Activated CD4-positive, alpha-beta T cell treated with anti-CD3 and anti-CD28 coated beads for 36 hours (primary cell): ENCODE measurements at regions of chr13 and their contacts with region 1.

Region 1: DNA sequence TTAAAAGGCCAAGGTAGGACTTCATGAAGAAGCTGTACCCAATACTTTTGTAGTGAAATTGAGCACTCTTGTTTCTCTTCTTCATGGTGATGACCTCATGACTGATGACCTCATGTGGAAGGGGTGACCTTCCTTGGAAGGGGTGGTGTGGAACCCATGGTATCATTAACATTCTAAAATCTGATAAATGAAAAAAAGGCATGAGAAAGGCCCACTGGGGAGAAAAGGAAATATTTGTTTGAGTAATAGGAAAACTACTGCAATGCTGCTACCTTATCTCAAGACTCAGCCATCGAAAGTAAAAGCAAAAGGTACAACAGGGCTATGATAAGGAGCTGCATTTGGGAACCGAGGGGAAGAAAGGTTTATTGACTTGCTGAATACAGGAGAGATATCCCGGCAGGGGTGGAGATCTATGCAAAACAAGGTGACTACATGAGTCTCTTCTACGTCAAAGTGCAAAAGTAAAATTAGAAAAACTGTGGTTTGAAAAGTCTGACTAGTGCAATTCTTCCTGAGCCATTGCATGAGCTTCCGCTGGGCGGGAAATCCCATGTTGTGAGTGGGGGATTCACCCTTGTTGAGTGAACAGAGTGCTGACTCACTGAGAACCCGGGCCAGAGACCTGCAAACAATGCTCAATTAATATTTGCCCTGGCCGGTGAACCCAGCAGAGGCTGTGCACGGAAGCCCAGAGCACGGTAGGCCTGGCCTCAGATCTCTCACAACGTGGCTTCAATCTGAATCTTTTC is 138.9 kb upstream of the RFC3 start:
- DNase-seq: peak; percentile 91
- ATAC-seq: peak; percentile 90
- H3K4me3 Mint-ChIP-seq: peak overlapping the region; percentile 64
- H3K27ac Mint-ChIP-seq: peak overlapping the region; percentile 89
- H3K4me1 Mint-ChIP-seq: peaks cover 37% of the 10 kb centered on the region
- H3K27me3 Mint-ChIP-seq: no peaks in the 10 kb centered on the region

Region 2: GRCh38 chr13:33639626-33640080 is 39.4 kb before region 1 on chr13:
- CTCF ChIA-PET with region 1: interaction called, 5 read pairs
- POLR2A ChIA-PET with region 1: no interaction called
- intact Hi-C with region 1: loop called (anchors 1 kb)
- DNase-seq: peak; percentile 79
- ATAC-seq: peak; percentile 89
- H3K4me3 Mint-ChIP-seq: no peak overlapping the region
- H3K27ac Mint-ChIP-seq: peak overlapping the region; percentile 88
- H3K4me1 Mint-ChIP-seq: peaks cover 50% of the 10 kb centered on the region
- H3K27me3 Mint-ChIP-seq: peaks cover under 1% of the 10 kb centered on the region

Region 3: DNA sequence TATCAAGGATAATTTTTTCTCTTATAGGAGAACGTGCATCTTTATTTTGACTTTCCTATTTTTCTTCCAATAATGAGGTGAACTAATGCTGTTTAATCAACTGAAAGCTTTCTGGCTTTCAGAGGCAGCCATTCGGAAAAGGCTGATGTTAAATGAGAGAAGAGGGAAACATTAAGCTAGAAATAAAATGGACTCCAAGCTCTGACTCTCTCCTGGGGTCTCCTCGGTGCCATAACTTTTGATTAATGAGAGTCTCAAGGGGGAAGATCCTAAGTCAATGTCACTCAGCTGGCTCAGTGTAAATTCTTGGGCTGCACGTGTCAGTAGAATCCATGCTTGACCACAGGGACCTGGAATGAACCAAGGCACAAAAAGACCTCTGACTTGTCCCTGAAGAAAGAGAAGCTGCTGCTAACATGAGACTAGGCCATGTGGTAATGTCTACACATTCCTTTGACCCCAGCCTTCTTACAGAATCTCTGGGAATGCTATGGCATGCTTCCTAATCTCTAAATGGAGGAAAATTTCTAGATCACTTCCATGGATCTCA is 13.4 kb before region 1 on chr13:
- CTCF ChIA-PET with region 1: no interaction called
- POLR2A ChIA-PET with region 1: no interaction called
- intact Hi-C with region 1: no loop called
- DNase-seq: no peak
- ATAC-seq: no peak
- H3K4me3 Mint-ChIP-seq: no peak overlapping the region
- H3K27ac Mint-ChIP-seq: no peak overlapping the region
- H3K4me1 Mint-ChIP-seq: peaks cover 7% of the 10 kb centered on the region
- H3K27me3 Mint-ChIP-seq: no peaks in the 10 kb centered on the region

Region 4: GRCh38 chr13:33865945-33866344 is 186.9 kb after region 1 on chr13:
- CTCF ChIA-PET with region 1: no interaction called
- POLR2A ChIA-PET with region 1: no interaction called
- intact Hi-C with region 1: no loop called
- DNase-seq: no peak
- ATAC-seq: no peak
- H3K4me3 Mint-ChIP-seq: no peak overlapping the region
- H3K27ac Mint-ChIP-seq: no peak overlapping the region
- H3K4me1 Mint-ChIP-seq: no peaks in the 10 kb centered on the region
- H3K27me3 Mint-ChIP-seq: no peaks in the 10 kb centered on the region

Region 5: DNA sequence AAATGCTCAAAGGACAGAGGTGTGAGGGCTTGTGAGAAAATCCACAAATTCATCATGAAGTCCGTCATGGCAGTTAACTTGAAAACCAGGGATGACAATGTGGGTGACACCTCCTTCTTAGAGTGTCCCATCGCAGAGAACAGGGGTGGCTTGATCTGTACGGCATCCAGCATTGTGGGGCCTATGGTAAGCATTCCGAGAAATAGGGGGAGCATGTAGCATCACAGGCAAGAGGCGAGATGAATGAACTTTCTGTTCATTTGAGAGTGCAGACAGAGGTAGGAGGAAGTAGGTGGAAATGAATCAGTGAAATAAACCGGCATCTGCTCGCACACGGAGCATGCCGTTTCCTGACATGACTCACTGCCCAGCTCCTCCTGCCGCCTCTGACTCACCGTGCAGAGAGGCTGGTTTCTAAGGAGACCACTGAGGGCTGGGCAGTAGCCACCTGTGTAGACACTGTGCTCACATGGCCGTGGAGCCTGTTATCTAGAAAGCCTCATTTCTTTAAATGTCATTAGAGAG is 477.8 kb after region 1 on chr13:
- CTCF ChIA-PET with region 1: no interaction called
- POLR2A ChIA-PET with region 1: no interaction called
- intact Hi-C with region 1: loop called in 1 of 2 experiments (anchors 5 kb)
- DNase-seq: peak; percentile 80
- ATAC-seq: peak; percentile 96
- H3K4me3 Mint-ChIP-seq: peak overlapping the region; percentile 20
- H3K27ac Mint-ChIP-seq: peak overlapping the region; percentile 68
- H3K4me1 Mint-ChIP-seq: peaks cover 14% of the 10 kb centered on the region
- H3K27me3 Mint-ChIP-seq: peaks cover 24% of the 10 kb centered on the region